ENCODE measurements at regions of chr7 and their contacts with region 1.

Region 1: GRCh38 chr7:150448789-150449147 is 1.7 kb upstream of the GIMAP8 start:
- DNase-seq: peak; percentile 76 to 92 (median 87)
- H3K4me3 ChIP-seq: no peak overlapping the region
- H3K27ac ChIP-seq: peak overlapping the region in 1 of 5 donors; percentile 1
- H3K4me1 ChIP-seq: peaks cover 11 to 24% of the 10 kb centered on the region in 2 donors
- H3K27me3 ChIP-seq: peaks cover 6% of the 10 kb centered on the region
- CTCF ChIP-seq: peak; percentile 78 to 93 (median 85)
- POLR2A ChIP-seq: no peak

Region 2: DNA sequence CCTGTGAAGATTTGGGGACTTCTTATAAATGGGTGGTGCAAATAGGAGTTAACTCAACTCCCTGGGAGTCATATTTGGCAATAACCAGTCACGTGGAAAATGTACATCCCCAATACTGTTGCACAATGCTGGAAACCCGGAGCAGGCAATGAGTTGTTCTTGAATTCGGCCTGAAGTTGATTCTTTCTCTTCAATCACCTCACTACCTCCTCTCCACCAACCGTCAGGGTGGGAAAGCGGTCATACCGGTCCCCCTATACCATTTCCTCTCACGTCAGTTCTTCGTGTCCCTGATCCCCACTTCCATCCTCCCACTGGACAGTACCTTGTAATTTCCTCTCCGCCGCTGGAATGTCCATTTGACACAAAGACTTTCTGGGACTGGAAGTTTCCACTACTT is 291.3 kb after region 1 on chr7:
- intact Hi-C with region 1: loop called in 1 of 2 experiments (anchors 10 kb)
- DNase-seq: peak in 1 of 7 donors; percentile 24
- H3K4me3 ChIP-seq: peak overlapping the region in 1 of 4 donors; percentile 38
- H3K27ac ChIP-seq: peak overlapping the region in 1 of 5 donors; percentile 11
- H3K4me1 ChIP-seq: no peaks in the 10 kb centered on the region
- H3K27me3 ChIP-seq: no peaks in the 10 kb centered on the region
- CTCF ChIP-seq: no peak
- POLR2A ChIP-seq: no peak

Region 3: DNA sequence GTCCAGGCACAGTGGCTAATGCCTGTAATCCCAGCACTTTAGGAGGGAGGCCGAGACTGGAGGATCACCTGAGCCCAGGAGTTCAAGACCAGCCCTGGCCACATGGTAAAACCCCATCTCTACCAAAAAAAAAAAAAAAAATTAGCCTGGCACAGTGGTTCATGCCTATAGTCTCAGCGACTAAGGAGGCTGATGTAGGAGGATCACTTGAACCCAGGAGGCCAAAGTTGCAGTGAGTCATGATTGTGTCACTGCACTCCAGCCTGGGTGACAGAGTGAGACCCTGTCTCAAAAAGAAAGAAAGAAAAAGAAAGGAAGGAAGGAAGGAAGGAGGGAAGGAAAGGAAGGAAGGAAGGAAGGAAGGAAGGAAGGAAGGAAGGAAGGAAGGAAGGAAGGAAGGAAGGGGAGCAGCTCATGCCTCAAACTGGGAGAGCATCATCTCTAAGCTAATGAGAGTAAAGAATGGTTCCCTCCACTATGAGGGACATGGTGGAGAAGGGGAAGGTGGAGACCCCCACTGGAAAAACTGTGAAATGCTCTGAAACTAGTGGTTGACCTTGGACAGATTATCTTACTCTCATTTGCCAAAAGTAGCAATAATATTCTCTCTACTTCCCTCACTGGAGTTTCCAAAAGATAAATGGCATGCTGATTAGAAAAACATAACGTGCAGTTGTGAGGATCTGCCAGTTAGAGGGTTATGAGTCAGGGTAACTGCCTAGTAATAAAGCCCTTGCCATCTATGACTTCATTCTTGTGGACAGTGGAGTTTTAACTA is 305.2 kb after region 1 on chr7:
- intact Hi-C with region 1: loop called (anchors 10 kb)
- DNase-seq: no peak
- H3K4me3 ChIP-seq: no peak overlapping the region
- H3K27ac ChIP-seq: no peak overlapping the region
- H3K4me1 ChIP-seq: peaks cover 0 to 3% of the 10 kb centered on the region in 2 donors
- H3K27me3 ChIP-seq: peaks cover 2% of the 10 kb centered on the region
- CTCF ChIP-seq: peak in 3 of 6 experiments; percentile 18 to 30 (median 27)
- POLR2A ChIP-seq: no peak